ENCODE measurements at regions of chr16 and their contacts with region 1.

Region 1: DNA sequence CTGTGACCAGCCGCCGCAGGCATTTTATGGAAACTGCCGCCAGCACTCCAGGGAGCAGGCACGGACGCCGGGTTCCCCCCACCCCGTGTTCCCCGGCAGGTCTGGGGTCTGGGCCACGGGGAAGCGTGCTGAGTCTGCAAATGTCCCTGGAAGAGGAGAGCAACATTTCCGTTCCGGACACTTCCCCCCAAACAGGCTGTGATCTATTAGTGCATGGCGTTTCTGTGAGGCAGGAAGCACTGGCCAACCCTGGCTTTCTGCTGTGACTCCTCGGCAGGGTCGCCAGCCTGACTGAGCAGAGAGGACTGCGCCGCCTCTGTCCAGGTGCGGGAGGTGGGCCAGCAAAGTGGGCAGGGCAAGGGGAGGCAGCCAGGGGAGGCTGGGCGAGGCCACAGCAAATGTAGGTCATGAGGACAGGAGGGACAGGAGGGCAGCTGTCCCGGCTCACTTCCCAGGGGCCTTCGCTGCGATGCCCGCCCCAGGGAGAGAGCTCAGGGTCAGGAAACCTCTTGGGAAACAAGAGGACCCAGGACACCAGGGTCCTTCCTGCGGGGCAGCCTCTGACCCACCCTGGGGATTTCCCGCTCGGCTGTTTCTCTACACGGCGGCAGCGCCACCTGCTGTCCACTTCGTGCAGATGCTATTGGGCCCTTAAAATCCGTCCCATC is 9.5 kb downstream of the FOXF1 start:
- DNase-seq: peak; percentile 62
- H3K4me3 Mint-ChIP-seq: no peak overlapping the region
- H3K27ac Mint-ChIP-seq: no peak overlapping the region
- H3K4me1 Mint-ChIP-seq: peaks cover 3% of the 10 kb centered on the region
- H3K27me3 Mint-ChIP-seq: peaks cover 51% of the 10 kb centered on the region

Region 2: DNA sequence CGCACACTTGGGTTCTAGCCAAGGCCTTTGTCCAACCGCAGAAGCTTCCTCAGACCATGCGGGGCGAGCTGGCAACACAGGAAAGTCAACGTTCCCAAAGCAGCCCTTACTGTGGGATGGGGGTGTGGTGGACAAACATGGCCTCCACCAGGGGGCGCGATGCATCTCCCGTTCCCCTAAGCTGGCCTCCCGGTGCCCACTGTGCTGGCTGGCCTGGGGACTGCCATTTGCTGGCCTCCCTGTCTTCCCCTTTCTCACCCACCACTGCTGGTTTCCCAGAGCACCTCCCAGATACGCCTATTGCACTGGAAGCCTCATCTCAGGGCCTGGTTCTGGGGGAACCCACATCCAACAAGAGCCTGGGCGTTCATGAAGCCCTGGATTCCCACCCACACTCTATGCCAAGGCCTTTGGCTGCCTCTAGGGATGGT is 475.5 kb before region 1 on chr16:
- CTCF ChIA-PET with region 1: interaction called, 7 read pairs
- intact Hi-C with region 1: loop called (anchors 1 kb)
- DNase-seq: peak; percentile 65
- H3K4me3 Mint-ChIP-seq: no peak overlapping the region
- H3K27ac Mint-ChIP-seq: no peak overlapping the region
- H3K4me1 Mint-ChIP-seq: peaks cover 21% of the 10 kb centered on the region
- H3K27me3 Mint-ChIP-seq: peaks cover 8% of the 10 kb centered on the region

Region 3: DNA sequence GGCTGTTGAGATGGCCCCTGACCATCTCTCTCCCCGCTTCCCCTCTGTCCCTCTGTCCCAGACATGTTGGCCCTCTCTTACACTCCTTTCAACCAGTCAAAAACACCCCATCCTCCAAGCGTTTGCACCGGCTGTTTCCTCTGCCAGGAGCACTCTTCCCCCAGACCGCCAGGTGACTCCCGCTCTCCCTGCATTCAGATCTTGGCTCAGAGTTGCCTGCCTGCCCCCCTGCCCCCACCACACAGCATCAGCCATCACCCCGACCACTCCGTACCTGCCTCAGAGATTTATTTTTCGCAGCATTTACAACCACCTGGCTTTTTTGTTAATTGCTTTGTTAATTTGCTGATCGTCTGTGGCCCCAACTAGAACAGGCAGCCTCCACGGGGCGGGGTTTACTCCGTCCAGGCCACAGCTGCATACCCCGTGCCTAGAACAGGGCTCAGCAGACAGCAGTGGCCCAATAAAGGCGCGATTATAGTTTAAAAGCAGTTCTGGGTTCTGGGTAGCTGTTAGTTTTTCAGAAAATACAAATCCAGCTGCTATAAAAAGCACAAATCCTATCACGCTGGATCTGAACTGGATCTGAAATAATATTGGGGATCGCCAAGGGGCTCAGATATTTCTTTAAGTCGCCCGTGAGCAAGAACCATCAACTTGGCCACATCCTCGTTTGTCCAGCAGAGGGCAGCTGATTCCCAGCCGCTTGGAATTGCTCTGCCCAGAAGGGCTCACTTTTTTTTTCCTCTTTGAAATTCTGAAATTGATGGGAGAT is 447.3 kb before region 1 on chr16:
- CTCF ChIA-PET with region 1: interaction called, 5 read pairs
- intact Hi-C with region 1: loop called (anchors 1 kb)
- DNase-seq: peak; percentile 73
- H3K4me3 Mint-ChIP-seq: no peak overlapping the region
- H3K27ac Mint-ChIP-seq: no peak overlapping the region
- H3K4me1 Mint-ChIP-seq: no peaks in the 10 kb centered on the region
- H3K27me3 Mint-ChIP-seq: peaks cover 17% of the 10 kb centered on the region

Region 4: GRCh38 chr16:86343027-86343787 is 176.6 kb before region 1 on chr16:
- CTCF ChIA-PET with region 1: interaction called, 7 read pairs
- intact Hi-C with region 1: loop called (anchors 1 kb)
- DNase-seq: no peak
- H3K4me3 Mint-ChIP-seq: no peak overlapping the region
- H3K27ac Mint-ChIP-seq: no peak overlapping the region
- H3K4me1 Mint-ChIP-seq: no peaks in the 10 kb centered on the region
- H3K27me3 Mint-ChIP-seq: peaks cover 52% of the 10 kb centered on the region

Region 5: GRCh38 chr16:86491256-86492023 is 28.3 kb before region 1 on chr16:
- CTCF ChIA-PET with region 1: no interaction called
- intact Hi-C with region 1: no loop called
- DNase-seq: no peak
- H3K4me3 Mint-ChIP-seq: no peak overlapping the region
- H3K27ac Mint-ChIP-seq: no peak overlapping the region
- H3K4me1 Mint-ChIP-seq: no peaks in the 10 kb centered on the region
- H3K27me3 Mint-ChIP-seq: peaks cover 55% of the 10 kb centered on the region